Sigmoid colon (tissue), 7 donors: ENCODE measurements at regions of chr1 and their contacts with region 1.

Region 1: GRCh38 chr1:226424228-226425003 is 16.5 kb upstream of the PARP1 start:
- DNase-seq: no peak
- H3K4me3 ChIP-seq: no peak overlapping the region
- H3K27ac ChIP-seq: no peak overlapping the region
- H3K4me1 ChIP-seq: peaks cover 0 to 7% (median 3%) of the 10 kb centered on the region in 4 donors
- H3K27me3 ChIP-seq: no peaks in the 10 kb centered on the region
- CTCF ChIP-seq: peak in 3 of 4 experiments; percentile 47 to 59 (median 48)
- EP300 ChIP-seq: no peak
- POLR2A ChIP-seq: no peak

Region 2: DNA sequence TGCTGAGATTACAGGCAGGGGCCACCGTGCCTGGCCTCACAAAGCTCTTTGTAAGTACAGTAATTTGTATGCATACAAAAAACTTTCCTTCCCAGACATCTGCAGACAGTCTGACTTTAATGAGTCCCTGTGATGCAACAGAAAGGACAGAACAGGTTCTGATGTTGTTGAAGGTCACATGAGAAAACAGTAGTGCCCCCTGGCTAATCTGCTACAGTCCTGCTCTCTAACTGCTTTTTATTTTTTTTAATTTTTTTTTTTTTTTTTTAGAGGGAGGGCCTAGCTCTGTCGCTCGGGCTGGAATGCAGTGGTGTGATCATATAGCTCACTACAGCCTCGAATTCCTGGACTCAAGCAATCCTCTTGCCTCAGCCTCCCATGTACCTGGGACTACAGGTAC is 274.6 kb before region 1 on chr1:
- intact Hi-C with region 1: no loop called
- DNase-seq: no peak
- H3K4me3 ChIP-seq: no peak overlapping the region
- H3K27ac ChIP-seq: no peak overlapping the region
- H3K4me1 ChIP-seq: no peaks in the 10 kb centered on the region
- H3K27me3 ChIP-seq: no peaks in the 10 kb centered on the region
- CTCF ChIP-seq: no peak
- EP300 ChIP-seq: no peak
- POLR2A ChIP-seq: no peak

Region 3: DNA sequence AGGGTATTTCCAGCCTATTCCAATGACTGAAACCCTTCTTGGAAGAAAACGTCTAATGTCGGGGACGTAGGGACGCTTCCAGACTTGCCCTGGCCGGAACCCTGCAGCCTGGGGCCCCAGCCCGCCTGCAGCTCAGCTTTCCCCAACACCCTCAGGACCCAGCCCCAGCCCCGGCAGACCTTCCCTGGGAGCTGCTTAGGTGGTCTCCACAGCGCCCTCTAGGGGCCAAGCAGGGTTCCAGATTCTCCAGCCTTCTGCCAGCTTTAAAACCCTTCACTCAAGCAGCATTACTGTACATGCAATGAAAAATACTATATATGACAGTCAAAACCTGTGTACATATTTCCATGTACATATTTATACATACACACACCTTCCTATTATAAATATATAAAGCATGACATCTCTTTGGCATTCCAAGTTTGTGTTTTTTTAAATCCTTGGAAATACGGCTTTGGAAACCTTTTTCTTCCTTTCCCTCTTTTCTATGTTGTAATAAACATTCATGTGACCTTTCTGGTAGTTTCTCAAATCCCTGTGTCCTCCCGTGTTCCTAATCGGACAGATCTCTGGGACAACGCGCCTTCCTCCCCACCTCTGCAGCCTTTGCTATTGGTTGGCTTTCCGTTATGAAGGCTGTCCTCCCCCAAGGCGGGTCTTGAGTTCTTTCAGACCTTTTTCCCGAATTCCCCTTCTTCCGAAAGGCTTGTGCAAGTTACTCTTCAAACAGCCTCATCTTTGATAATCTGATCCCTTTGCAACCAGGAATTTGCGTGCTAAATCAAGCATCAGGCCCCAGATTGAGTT is 184.5 kb after region 1 on chr1:
- intact Hi-C with region 1: loop called (anchors 10 kb)
- DNase-seq: peak; percentile 78
- H3K4me3 ChIP-seq: no peak overlapping the region
- H3K27ac ChIP-seq: peak overlapping the region in 2 of 4 donors; percentile 15 to 27
- H3K4me1 ChIP-seq: peaks cover 0 to 35% (median 27%) of the 10 kb centered on the region in 4 donors
- H3K27me3 ChIP-seq: no peaks in the 10 kb centered on the region
- CTCF ChIP-seq: peak; percentile 36 to 86 (median 74)
- EP300 ChIP-seq: no peak
- POLR2A ChIP-seq: no peak